Activated CD4-positive, alpha-beta memory T cell treated with anti-CD3 and anti-CD28 coated beads, Interleukin-2, amount 10 ng/mL, durations not matched to agents 7 days and 5 days (primary cell): ENCODE measurements at regions of chr7 and their contacts with region 1.

Region 1: GRCh38 chr7:132451161-132451560 is 125.1 kb downstream of the PLXNA4 start:
- DNase-seq: peak; percentile 61
- H3K4me3 Mint-ChIP-seq: no peak overlapping the region
- H3K27ac Mint-ChIP-seq: peak overlapping the region; percentile 47
- H3K4me1 Mint-ChIP-seq: peaks cover 70% of the 10 kb centered on the region
- H3K27me3 Mint-ChIP-seq: peaks cover 14% of the 10 kb centered on the region

Region 2: GRCh38 chr7:132430861-132431822 is 20.0 kb before region 1 on chr7:
- CTCF ChIA-PET with region 1: interaction called, 5 read pairs
- POLR2A ChIA-PET with region 1: interaction called, 24 read pairs
- DNase-seq: peak; percentile 85
- H3K4me3 Mint-ChIP-seq: no peak overlapping the region
- H3K27ac Mint-ChIP-seq: peak overlapping the region; percentile 79
- H3K4me1 Mint-ChIP-seq: peaks cover 78% of the 10 kb centered on the region
- H3K27me3 Mint-ChIP-seq: no peaks in the 10 kb centered on the region

Region 3: GRCh38 chr7:132437730-132438129 is 13.4 kb before region 1 on chr7:
- CTCF ChIA-PET with region 1: interaction called, 5 read pairs
- POLR2A ChIA-PET with region 1: interaction called, 24 read pairs
- DNase-seq: peak; percentile 74
- H3K4me3 Mint-ChIP-seq: peak overlapping the region; percentile 0
- H3K27ac Mint-ChIP-seq: peak overlapping the region; percentile 50
- H3K4me1 Mint-ChIP-seq: peaks cover 79% of the 10 kb centered on the region
- H3K27me3 Mint-ChIP-seq: peaks cover 11% of the 10 kb centered on the region